ENCODE measurements at regions of chr4 and their contacts with region 1.

Region 1: DNA sequence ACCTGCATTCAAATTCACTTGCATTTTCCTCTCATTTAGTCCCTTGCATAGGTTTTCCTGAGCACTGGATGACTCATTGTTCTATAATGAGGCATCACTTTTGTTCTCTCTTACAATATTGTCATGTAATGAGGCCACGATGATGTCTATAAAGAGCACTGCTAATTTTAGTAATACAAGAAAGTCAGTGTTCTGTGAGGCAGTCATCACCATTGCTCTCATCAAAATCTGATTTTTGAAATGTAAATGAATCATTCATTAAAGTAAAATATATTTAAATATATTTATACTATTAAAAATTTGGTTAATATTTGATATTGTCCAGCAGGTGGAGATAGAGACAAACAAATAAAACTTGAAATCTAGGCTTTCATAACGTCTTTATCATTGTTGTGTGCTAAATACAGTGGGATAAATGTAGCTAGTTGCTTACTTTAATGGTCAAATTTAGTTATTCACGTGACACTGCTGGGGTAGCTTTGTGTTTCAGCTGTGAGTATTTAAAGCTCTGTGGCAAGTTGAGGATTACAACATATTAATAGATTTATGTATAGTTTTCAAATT is 15.4 kb downstream of the HMGB2 start:
- DNase-seq: peak; percentile 15
- ATAC-seq: peak; percentile 30; the same call in 1 of the 2 replicates
- H3K4me3 ChIP-seq: no peak overlapping the region
- H3K27ac ChIP-seq: no peak overlapping the region
- H3K4me1 ChIP-seq: no peaks in the 10 kb centered on the region
- H3K27me3 ChIP-seq: no peaks in the 10 kb centered on the region
- CTCF ChIP-seq: peak in 1 of 3 experiments; percentile 50; a peak in 1 of 6 replicates
- POLR2A ChIP-seq: no peak
- RAD21 ChIP-seq: peak; percentile 59

Region 2: DNA sequence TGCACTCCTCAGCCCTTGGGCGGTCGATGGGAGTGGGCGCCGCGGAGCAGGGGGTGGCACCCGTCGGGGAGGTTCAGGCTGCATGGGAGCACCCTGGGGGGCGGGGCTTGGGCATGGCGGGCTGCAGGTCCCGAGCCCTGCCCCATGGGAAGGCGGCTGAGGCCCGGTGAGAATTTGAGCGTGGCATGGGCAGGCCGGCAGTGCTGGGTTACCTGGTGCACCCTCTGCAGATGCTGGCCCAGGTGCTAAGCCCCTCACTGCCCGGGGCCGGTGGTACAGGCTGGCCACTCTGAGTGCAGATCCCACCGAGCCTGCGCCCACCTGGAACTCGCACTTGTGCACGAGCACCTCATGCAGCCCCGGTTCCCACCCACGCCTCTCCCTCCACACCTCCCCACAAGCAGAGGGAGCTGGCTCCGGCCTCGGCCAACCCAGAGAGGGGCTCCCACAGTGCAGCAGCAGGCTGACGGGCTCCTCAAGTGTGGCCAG is 949.2 kb before region 1 on chr4:
- CTCF ChIA-PET with region 1: no interaction called
- POLR2A ChIA-PET with region 1: no interaction called
- RAD21 ChIA-PET with region 1: no interaction called
- intact Hi-C with region 1: no loop called
- DNase-seq: no peak
- ATAC-seq: no peak
- H3K4me3 ChIP-seq: no peak overlapping the region
- H3K27ac ChIP-seq: no peak overlapping the region
- H3K4me1 ChIP-seq: no peaks in the 10 kb centered on the region
- H3K27me3 ChIP-seq: no peaks in the 10 kb centered on the region
- CTCF ChIP-seq: no peak
- POLR2A ChIP-seq: no peak
- RAD21 ChIP-seq: no peak

Region 3: GRCh38 chr4:173301518-173302201 is 17.1 kb before region 1 on chr4:
- CTCF ChIA-PET with region 1: interaction called, 18 read pairs
- POLR2A ChIA-PET with region 1: no interaction called
- RAD21 ChIA-PET with region 1: no interaction called
- intact Hi-C with region 1: no loop called
- DNase-seq: peak; percentile 3
- ATAC-seq: no peak
- H3K4me3 ChIP-seq: no peak overlapping the region
- H3K27ac ChIP-seq: no peak overlapping the region
- H3K4me1 ChIP-seq: no peaks in the 10 kb centered on the region
- H3K27me3 ChIP-seq: no peaks in the 10 kb centered on the region
- CTCF ChIP-seq: peak; percentile 56 to 89 (median 66); a peak in 5 of 6 replicates
- POLR2A ChIP-seq: no peak
- RAD21 ChIP-seq: peak; percentile 68

Region 4: DNA sequence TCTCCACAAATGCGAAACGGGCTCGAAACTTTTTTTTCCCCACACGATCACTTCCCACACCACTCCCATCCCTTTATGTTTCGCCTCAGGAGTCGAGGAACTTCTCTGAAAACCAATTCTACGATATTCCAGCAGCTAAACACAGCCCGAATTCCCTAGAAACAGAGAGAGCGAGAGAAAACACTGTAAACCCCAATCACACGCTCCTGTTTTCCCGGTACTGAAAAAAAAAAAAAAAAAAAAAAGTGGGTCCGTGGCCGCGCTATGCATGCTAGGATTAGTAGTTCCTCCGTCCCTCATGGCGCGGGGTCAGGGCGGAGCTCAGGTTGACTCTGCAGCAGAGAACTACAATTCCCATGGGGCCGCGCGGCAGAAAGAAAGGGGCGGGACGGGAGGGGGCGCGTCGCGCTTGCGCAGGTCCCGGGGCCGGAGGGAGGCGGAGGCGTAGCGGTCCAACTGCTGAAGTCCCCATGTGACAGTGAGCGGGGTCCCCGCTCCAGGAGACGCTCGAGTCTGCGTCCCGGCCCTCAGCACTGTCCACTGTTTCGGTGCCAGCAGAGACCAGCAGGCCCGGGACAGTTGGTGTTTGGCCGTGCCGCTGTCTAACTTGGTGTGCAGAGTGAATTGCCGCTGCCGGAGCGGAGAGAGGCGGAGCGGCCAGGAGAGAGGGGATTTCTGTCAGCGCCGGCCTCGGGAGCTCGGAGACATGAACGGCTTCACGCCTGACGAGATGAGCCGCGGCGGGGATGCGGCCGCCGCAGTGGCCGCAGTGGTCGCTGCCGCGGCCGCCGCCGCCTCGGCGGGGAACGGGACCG is 52.0 kb after region 1 on chr4 and contains the start of gene SAP30:
- CTCF ChIA-PET with region 1: interaction called, 13 read pairs
- POLR2A ChIA-PET with region 1: interaction called, 4 read pairs
- RAD21 ChIA-PET with region 1: no interaction called
- intact Hi-C with region 1: no loop called
- DNase-seq: peak; percentile 94
- ATAC-seq: peak; percentile 87
- H3K4me3 ChIP-seq: peak within 1 kb of the TSS; percentile 81 to 86
- H3K27ac ChIP-seq: peak within 1 kb of the TSS; percentile 73
- H3K4me1 ChIP-seq: peaks cover 0 to 20% of the 10 kb centered on the region in 2 experiments; a peak in 3 of 4 replicates
- H3K27me3 ChIP-seq: no peaks in the 10 kb centered on the region
- CTCF ChIP-seq: no peak
- POLR2A ChIP-seq: peak; percentile 89
- RAD21 ChIP-seq: no peak
- total RNA-seq, gene SAP30: 12.0 TPM

Region 5: GRCh38 chr4:173420324-173420752 is 101.6 kb after region 1 on chr4:
- CTCF ChIA-PET with region 1: interaction called, 21 read pairs
- POLR2A ChIA-PET with region 1: no interaction called
- RAD21 ChIA-PET with region 1: interaction called in 1 of 2 experiments, 3 read pairs
- intact Hi-C with region 1: loop called (anchors 1 kb)
- DNase-seq: peak; percentile 12
- ATAC-seq: peak; percentile 67
- H3K4me3 ChIP-seq: no peak overlapping the region
- H3K27ac ChIP-seq: no peak overlapping the region
- H3K4me1 ChIP-seq: peaks cover 0 to 5% of the 10 kb centered on the region in 2 experiments; a peak in 1 of 4 replicates
- H3K27me3 ChIP-seq: no peaks in the 10 kb centered on the region
- CTCF ChIP-seq: peak; percentile 31 to 62 (median 56); a peak in 3 of 6 replicates
- POLR2A ChIP-seq: no peak
- RAD21 ChIP-seq: peak; percentile 63

Region 6: GRCh38 chr4:173494013-173494970 is 175.6 kb after region 1 on chr4:
- CTCF ChIA-PET with region 1: interaction called, 11 read pairs
- POLR2A ChIA-PET with region 1: no interaction called
- RAD21 ChIA-PET with region 1: no interaction called
- intact Hi-C with region 1: loop called (anchors 5 kb)
- DNase-seq: peak; percentile 72
- ATAC-seq: peak; percentile 98
- H3K4me3 ChIP-seq: peak overlapping the region; percentile 7; a peak in 1 of 4 replicates
- H3K27ac ChIP-seq: no peak overlapping the region
- H3K4me1 ChIP-seq: peaks cover 4 to 11% of the 10 kb centered on the region in 2 experiments; a peak in 3 of 4 replicates
- H3K27me3 ChIP-seq: no peaks in the 10 kb centered on the region
- CTCF ChIP-seq: peak; percentile 83 to 90 (median 87)
- POLR2A ChIP-seq: no peak
- RAD21 ChIP-seq: peak; percentile 75

Region 7: DNA sequence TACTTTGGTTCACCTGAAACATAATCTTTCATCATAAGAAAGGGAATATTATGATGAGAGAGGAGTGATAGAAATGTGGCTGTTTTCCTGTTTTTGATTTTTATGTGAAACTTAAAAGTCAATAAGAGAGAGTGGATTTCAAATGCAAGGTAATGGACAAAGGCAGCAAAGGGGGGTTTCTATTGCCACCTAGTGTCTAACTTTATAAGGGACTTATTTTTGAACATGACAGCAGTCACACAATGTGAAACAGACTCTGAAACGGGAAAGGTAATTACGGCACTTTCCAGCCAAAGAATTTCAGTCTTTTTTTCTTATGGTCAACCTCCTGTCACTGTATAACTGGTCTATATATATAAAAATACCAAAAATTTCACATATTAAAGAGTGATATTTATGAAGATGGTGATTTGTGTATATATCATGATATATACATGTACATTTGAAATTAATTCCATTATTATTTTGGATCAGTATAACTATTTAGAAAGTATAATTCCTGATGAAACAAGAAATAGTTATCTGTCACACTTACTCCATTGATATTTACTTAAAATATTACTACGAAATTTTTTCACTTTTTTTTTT is 837.6 kb after region 1 on chr4:
- CTCF ChIA-PET with region 1: no interaction called
- POLR2A ChIA-PET with region 1: no interaction called
- RAD21 ChIA-PET with region 1: no interaction called
- intact Hi-C with region 1: loop called (anchors 10 kb)
- DNase-seq: peak; percentile 48
- ATAC-seq: peak; percentile 82
- H3K4me3 ChIP-seq: no peak overlapping the region
- H3K27ac ChIP-seq: no peak overlapping the region
- H3K4me1 ChIP-seq: no peaks in the 10 kb centered on the region
- H3K27me3 ChIP-seq: peaks cover 56% of the 10 kb centered on the region
- CTCF ChIP-seq: peak; percentile 45 to 66 (median 60); a peak in 5 of 6 replicates
- POLR2A ChIP-seq: no peak
- RAD21 ChIP-seq: peak; percentile 66

Region 8: DNA sequence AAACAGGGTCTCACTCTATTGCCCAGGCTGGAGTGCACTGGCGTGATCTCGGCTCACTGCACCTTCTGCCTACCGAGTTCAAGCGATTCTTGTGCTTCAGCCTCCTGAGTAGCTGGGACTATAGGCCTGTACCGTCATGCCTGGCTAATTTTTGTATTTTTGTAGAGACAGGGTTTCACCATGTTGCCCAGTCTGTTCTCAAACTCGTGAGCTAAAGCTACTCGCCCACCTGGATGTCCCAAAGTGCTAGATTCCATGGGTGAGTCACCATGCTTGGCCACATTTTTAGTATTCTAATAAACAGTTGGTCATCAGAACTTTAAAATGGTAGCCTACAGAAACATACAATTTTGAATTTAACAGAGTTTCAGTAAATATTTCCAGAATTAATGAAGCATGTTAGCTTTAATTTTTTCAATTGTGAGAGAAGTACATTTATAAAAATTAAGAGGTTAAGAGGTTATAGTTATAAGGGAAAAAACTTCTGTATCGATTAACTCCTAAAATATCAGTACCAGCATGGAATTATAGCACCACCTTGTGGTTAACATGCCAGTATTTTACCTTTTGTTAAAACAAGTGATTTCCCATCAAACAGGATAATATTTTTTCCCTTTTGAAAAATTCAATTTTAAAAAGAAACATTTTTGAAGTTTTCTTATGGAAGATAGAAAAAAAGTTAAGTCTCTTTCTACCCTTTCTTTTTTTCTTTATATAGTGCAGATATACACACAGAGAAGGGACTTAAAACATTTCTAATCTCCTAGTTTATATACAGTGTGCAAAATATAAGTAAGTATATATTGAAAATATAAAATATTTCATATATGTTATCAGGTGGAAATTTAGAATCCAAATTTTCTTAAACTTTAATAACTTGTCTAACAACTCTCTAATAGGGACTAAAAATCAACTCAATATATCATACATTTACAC is 1000.4 kb after region 1 on chr4:
- CTCF ChIA-PET with region 1: no interaction called
- POLR2A ChIA-PET with region 1: no interaction called
- RAD21 ChIA-PET with region 1: no interaction called
- intact Hi-C with region 1: loop called (anchors 10 kb)
- DNase-seq: peak; percentile 22
- ATAC-seq: no peak
- H3K4me3 ChIP-seq: no peak overlapping the region
- H3K27ac ChIP-seq: no peak overlapping the region
- H3K4me1 ChIP-seq: no peaks in the 10 kb centered on the region
- H3K27me3 ChIP-seq: no peaks in the 10 kb centered on the region
- CTCF ChIP-seq: peak; percentile 51 to 77 (median 51); a peak in 4 of 6 replicates
- POLR2A ChIP-seq: no peak
- RAD21 ChIP-seq: peak; percentile 68

Measured in HCT116 (cell line).